Activated CD8-positive, alpha-beta T cell treated with anti-CD3 and anti-CD28 coated beads, Interleukin-2, amount 10 ng/mL, durations not matched to agents 7 days and 5 days (primary cell): ENCODE measurements at regions of chr19 and their contacts with region 1.

Region 1: GRCh38 chr19:4139614-4140236 is 13.7 kb upstream of the CREB3L3 start:
- DNase-seq: peak; percentile 92
- ATAC-seq: peak; percentile 90
- H3K4me3 Mint-ChIP-seq: peak overlapping the region; percentile 5
- H3K27ac Mint-ChIP-seq: peak overlapping the region; percentile 81
- H3K4me1 Mint-ChIP-seq: peaks cover 15% of the 10 kb centered on the region
- H3K27me3 Mint-ChIP-seq: peaks cover 7% of the 10 kb centered on the region

Region 2: DNA sequence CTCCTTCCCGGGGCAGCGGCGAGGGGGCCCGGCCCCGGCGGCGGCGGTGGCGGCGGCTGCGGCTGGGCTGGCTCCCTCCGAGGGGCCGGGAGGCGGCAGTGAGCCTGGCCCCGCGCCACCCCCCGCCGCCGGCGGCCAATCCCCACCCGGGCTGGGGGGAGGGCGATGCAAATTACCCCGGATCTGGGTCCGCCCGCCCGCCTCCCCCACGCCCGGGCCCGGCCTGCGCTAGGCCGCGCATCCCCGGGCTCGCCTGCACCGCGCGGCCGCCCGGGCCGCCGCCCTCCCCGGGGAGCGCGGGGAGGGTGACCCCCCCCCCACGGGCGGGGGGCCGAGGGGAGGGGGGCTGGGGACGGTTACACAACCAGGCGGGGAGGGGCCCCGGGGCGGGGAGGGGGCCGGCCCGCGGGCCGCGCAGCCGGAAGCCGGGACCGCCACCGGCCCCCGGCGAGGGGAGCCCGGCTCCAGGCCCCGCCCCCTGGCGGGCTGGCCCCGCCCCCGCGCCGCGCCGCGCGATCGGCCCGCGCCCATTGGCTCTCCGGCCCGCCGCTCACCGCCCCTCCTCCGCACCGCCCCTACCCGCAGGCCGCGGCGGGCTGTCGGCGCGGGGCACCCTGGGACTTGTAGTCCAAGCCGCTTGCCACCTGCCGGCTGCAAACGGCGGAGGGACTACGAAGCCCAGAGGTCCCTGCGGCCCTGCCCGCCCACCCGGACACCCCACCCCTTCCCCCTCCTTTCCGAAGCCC is 74.1 kb before region 1 on chr19:
- CTCF ChIA-PET with region 1: interaction called, 11 read pairs
- POLR2A ChIA-PET with region 1: no interaction called
- DNase-seq: peak; percentile 97
- ATAC-seq: peak; percentile 72
- H3K4me3 Mint-ChIP-seq: peak overlapping the region; percentile 67
- H3K27ac Mint-ChIP-seq: peak overlapping the region; percentile 64
- H3K4me1 Mint-ChIP-seq: peaks cover 42% of the 10 kb centered on the region
- H3K27me3 Mint-ChIP-seq: no peaks in the 10 kb centered on the region

Region 3: DNA sequence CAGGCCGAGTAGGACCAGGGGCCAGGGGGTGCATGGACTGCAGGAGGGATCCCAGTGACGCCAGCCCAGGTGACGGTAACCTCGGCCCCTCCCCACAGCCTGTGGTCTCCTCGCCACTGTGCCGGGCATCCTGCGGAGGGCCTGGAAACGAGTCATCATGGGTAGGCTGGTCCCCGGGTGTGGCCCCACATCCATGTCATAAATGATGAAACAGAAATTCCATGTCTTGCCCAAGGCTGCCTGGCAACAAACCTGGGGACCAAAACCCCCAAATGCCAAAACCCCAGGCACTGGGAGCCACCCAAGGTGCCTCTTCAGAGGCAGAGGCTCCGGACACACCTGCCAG is 36.7 kb before region 1 on chr19:
- CTCF ChIA-PET with region 1: interaction called, 19 read pairs
- POLR2A ChIA-PET with region 1: no interaction called
- DNase-seq: no peak
- ATAC-seq: no peak
- H3K4me3 Mint-ChIP-seq: no peak overlapping the region
- H3K27ac Mint-ChIP-seq: peak overlapping the region; percentile 99
- H3K4me1 Mint-ChIP-seq: peaks cover 48% of the 10 kb centered on the region
- H3K27me3 Mint-ChIP-seq: no peaks in the 10 kb centered on the region

Region 4: DNA sequence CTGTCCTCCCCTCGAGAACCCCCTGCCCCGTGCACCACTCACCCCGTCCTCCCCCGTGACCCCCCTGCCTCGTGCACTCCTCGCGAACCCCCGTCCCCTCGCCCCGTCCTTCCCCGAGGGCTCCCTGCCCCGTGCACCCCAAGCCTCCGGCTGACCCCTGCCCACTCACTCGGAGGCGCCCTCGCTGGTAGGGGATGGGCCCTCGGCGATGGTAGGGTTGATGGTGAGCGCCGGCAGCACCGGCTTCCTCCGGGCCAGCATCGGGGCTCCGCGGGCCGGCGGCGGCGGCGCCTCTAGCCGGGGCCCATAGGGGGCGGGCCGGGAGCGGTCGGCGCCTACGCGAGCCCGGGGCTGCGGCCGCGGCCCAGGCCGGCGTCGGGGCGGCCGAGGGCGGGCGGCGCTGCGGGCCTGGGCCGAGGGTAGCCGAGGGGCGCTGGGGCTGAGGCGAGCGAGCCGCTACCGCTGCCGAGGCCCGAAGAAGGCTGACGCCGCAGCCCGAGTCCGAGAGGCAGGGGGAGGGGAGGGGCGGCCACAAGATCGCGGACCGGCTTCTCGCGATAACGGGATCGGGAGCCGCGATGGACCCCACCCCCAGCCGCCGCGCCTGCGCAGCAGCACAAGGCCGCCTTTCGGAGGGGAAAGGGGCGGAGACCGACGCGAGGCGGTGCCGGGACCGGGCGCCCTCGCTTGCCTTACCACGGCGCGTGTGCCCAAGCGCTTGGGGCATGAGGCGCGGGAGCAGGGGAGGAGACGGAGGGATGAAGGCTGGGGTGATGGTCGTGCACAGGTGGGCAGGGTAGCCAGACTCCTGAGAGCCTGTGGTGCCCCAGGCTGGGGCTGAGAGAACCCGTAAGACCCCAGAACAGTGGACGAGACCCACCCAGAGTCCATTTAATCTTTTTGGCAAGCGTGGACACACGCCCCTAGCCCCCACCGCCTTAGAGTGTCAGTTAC is 15.8 kb before region 1 on chr19 and contains the start of gene MAP2K2:
- CTCF ChIA-PET with region 1: interaction called, 36 read pairs
- POLR2A ChIA-PET with region 1: no interaction called
- DNase-seq: peak; percentile 96
- ATAC-seq: peak; percentile 96
- H3K4me3 Mint-ChIP-seq: peak within 1 kb of the TSS; percentile 89
- H3K27ac Mint-ChIP-seq: peak within 1 kb of the TSS; percentile 91
- H3K4me1 Mint-ChIP-seq: peaks cover 27% of the 10 kb centered on the region
- H3K27me3 Mint-ChIP-seq: no peaks in the 10 kb centered on the region
- total RNA-seq, gene MAP2K2: 218 to 234 TPM

Region 5: GRCh38 chr19:4164262-4164661 is 24.5 kb after region 1 on chr19:
- CTCF ChIA-PET with region 1: interaction called, 11 read pairs
- POLR2A ChIA-PET with region 1: no interaction called
- DNase-seq: no peak
- ATAC-seq: no peak
- H3K4me3 Mint-ChIP-seq: no peak overlapping the region
- H3K27ac Mint-ChIP-seq: no peak overlapping the region
- H3K4me1 Mint-ChIP-seq: no peaks in the 10 kb centered on the region
- H3K27me3 Mint-ChIP-seq: no peaks in the 10 kb centered on the region